MCF 10A (cell line): ENCODE measurements at regions of chr10 and their contacts with region 1.

Region 1: GRCh38 chr10:80498833-80499741 is 38.6 kb upstream of the SH2D4B start:
- DNase-seq: peak; percentile 99
- H3K4me3 Mint-ChIP-seq: peak overlapping the region; percentile 45
- H3K27ac Mint-ChIP-seq: peak overlapping the region; percentile 37
- H3K4me1 Mint-ChIP-seq: peaks cover 83% of the 10 kb centered on the region
- H3K27me3 Mint-ChIP-seq: no peaks in the 10 kb centered on the region
- CTCF ChIP-seq: no peak

Region 2: DNA sequence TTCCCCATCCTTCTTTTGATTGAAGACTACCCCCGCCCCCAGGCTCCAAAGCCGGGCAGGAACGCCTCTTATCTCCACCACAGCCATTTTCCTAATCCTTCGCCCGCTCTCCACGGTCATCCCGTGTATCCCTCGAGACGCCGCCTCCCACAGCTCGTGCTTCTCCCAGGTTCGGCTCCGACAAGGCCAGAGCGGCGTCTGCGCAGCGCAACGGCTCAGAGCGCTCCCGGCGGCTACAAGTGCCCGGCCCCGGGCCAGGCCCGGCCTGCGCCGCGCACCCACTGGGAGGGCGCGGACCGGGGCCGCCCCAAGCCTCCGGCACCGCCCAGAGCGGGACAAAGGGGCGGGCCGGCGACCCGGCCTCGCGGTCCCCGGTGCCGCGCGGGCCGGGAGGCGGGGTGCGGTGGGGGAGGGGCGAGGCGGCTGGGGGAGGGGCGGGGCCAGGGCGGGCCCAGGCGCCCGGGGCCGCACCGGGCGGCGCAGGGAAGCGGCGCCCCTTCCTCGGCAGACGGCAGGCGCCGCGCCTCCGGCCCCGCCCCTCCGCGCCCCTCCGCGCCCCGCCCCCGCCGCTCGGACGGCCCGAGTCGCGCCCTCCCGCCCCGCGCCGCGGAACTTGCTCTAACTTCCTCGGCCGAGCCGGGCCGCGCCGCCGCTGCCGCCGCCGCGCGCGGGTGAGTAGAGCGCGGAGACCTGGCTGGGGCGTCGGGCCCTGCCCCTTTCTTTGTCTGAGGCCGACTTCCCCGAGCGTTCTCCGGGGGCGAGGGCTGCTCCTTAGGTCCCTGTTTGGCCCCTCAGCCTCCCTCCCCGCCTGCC is 45.2 kb before region 1 on chr10 and contains the start of gene TSPAN14:
- CTCF ChIA-PET with region 1: interaction called, 923 read pairs
- POLR2A ChIA-PET with region 1: interaction called, 225 read pairs
- intact Hi-C with region 1: no loop called
- DNase-seq: peak; percentile 71
- H3K4me3 Mint-ChIP-seq: peak within 1 kb of the TSS; percentile 79
- H3K27ac Mint-ChIP-seq: peak within 1 kb of the TSS; percentile 32
- H3K4me1 Mint-ChIP-seq: peaks cover 20% of the 10 kb centered on the region
- H3K27me3 Mint-ChIP-seq: no peaks in the 10 kb centered on the region
- CTCF ChIP-seq: no peak
- total RNA-seq, gene TSPAN14: 46.9 and 53.7 TPM in 2 replicates

Region 3: DNA sequence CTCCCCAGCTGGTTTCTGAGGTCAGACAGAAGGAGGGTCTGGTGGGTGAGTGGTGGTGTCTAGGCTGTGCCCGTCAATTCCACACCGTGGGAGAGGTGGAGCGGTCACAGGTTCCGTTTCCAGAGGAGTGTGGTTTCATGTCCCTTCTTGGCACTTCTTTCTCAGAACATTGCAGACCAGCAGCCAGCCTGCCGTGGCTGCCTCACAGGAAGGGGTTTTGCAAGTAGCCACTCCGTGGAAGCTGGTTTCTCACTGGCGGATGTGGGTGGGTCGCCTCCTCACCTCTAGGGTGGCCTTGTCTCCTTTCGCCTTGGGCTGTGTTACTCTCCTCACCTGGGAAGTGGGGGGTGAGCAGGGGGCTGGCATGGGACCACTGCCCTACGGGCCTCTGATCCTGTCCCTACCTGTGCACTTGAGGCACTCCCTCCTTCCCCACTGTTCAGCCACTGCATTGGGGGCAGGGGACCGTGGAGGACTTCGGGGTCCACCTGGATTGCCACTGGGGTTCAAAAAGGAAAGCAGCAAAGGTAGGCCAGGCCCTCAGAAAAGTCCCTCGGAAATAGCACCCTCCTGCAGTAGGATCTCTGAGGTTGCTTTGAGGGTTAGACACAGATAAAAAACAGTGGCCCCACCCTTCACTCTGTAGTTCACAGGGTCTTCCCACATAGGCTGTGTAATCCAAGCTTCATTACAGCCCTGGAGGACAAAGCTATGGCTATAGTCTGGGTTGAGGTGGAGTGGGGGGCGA is 11.1 kb before region 1 on chr10:
- CTCF ChIA-PET with region 1: interaction called, 27 read pairs
- POLR2A ChIA-PET with region 1: interaction called, 28 read pairs
- intact Hi-C with region 1: no loop called
- DNase-seq: no peak
- H3K4me3 Mint-ChIP-seq: no peak overlapping the region
- H3K27ac Mint-ChIP-seq: peak overlapping the region; percentile 90
- H3K4me1 Mint-ChIP-seq: peaks cover 45% of the 10 kb centered on the region
- H3K27me3 Mint-ChIP-seq: no peaks in the 10 kb centered on the region
- CTCF ChIP-seq: no peak

Region 4: GRCh38 chr10:80664071-80664680 is 165.1 kb after region 1 on chr10:
- CTCF ChIA-PET with region 1: no interaction called
- POLR2A ChIA-PET with region 1: no interaction called
- intact Hi-C with region 1: no loop called
- DNase-seq: peak; percentile 78
- H3K4me3 Mint-ChIP-seq: no peak overlapping the region
- H3K27ac Mint-ChIP-seq: no peak overlapping the region
- H3K4me1 Mint-ChIP-seq: no peaks in the 10 kb centered on the region
- H3K27me3 Mint-ChIP-seq: peaks cover 25% of the 10 kb centered on the region
- CTCF ChIP-seq: peak; percentile 94

Region 5: DNA sequence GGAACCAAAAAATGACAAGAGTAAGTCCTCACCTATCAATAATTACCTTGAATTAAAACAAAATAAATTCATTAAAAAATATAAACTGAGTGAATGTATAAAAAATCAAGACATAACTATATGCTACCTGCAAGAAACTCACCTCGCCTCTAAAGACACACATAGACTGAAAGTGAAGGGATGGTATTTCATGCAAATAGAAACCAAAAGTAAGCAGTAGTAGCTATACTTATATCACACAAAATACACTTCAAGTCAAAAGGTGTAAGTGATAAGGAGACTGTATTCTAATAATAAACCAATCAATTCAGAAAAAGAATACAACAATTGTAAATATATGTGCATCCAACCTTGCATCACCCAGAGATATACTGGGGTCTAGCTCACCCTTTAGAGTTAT is 371.2 kb after region 1 on chr10:
- CTCF ChIA-PET with region 1: no interaction called
- POLR2A ChIA-PET with region 1: no interaction called
- intact Hi-C with region 1: no loop called
- DNase-seq: no peak
- H3K4me3 Mint-ChIP-seq: no peak overlapping the region
- H3K27ac Mint-ChIP-seq: no peak overlapping the region
- H3K4me1 Mint-ChIP-seq: no peaks in the 10 kb centered on the region
- H3K27me3 Mint-ChIP-seq: no peaks in the 10 kb centered on the region
- CTCF ChIP-seq: no peak